IMR-90 (cell line): ENCODE measurements at regions of chr5 and their contacts with region 1.

Region 1: DNA sequence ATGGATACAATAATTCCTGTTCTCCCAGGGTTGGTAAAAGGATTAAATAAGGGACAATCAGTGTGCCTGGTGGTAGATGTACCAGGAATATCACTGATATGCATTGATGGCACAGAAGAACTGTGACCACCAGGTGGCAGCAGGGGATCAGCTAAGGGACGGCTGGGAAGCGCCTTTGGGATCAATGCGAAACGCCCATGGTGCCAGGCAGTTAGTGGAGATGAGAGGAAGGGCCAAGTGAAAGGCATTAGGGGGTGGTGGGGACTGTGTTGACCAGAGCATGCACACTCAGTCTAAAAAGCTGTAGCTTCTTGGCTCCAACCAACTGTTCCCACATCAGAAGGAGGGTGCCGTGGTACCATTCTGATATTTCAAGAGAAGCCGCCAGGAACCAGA is 55.6 kb downstream of the ARHGEF37 start:
- DNase-seq: peak; percentile 62
- ATAC-seq: peak; percentile 83
- H3K4me3 ChIP-seq: no peak overlapping the region
- H3K27ac ChIP-seq: no peak overlapping the region
- H3K4me1 ChIP-seq: peaks cover 9% of the 10 kb centered on the region
- H3K27me3 ChIP-seq: peaks cover 9% of the 10 kb centered on the region; the same call in 1 of the 2 replicates
- CTCF ChIP-seq: peak; percentile 80
- POLR2A ChIP-seq: no peak
- RAD21 ChIP-seq: peak; percentile 92

Region 2: GRCh38 chr5:148353634-148354033 is 1283.2 kb before region 1 on chr5:
- CTCF ChIA-PET with region 1: no interaction called
- POLR2A ChIA-PET with region 1: no interaction called
- dilution Hi-C with region 1: no loop called
- in situ Hi-C with region 1: no loop called
- intact Hi-C with region 1: no loop called
- DNase-seq: no peak
- ATAC-seq: no peak
- H3K4me3 ChIP-seq: no peak overlapping the region
- H3K27ac ChIP-seq: no peak overlapping the region
- H3K4me1 ChIP-seq: no peaks in the 10 kb centered on the region
- H3K27me3 ChIP-seq: no peaks in the 10 kb centered on the region
- CTCF ChIP-seq: no peak
- POLR2A ChIP-seq: no peak
- RAD21 ChIP-seq: no peak

Region 3: GRCh38 chr5:149485655-149486425 is 151.0 kb before region 1 on chr5:
- CTCF ChIA-PET with region 1: no interaction called
- POLR2A ChIA-PET with region 1: no interaction called
- dilution Hi-C with region 1: no loop called
- in situ Hi-C with region 1: no loop called
- intact Hi-C with region 1: no loop called
- DNase-seq: peak; percentile 100
- ATAC-seq: peak; percentile 74
- H3K4me3 ChIP-seq: no peak overlapping the region
- H3K27ac ChIP-seq: peak overlapping the region; percentile 84
- H3K4me1 ChIP-seq: peaks cover 31% of the 10 kb centered on the region
- H3K27me3 ChIP-seq: no peaks in the 10 kb centered on the region
- CTCF ChIP-seq: no peak
- POLR2A ChIP-seq: no peak
- RAD21 ChIP-seq: peak; percentile 8; the same call in 1 of the 2 replicates

Region 4: GRCh38 chr5:149576021-149576420 is 60.8 kb before region 1 on chr5:
- CTCF ChIA-PET with region 1: no interaction called
- POLR2A ChIA-PET with region 1: no interaction called
- dilution Hi-C with region 1: no loop called
- in situ Hi-C with region 1: no loop called
- intact Hi-C with region 1: no loop called
- DNase-seq: no peak
- ATAC-seq: no peak
- H3K4me3 ChIP-seq: no peak overlapping the region
- H3K27ac ChIP-seq: no peak overlapping the region
- H3K4me1 ChIP-seq: peaks cover 3% of the 10 kb centered on the region
- H3K27me3 ChIP-seq: no peaks in the 10 kb centered on the region
- CTCF ChIP-seq: no peak
- POLR2A ChIP-seq: no peak
- RAD21 ChIP-seq: no peak

Region 5: GRCh38 chr5:149680810-149681221 is 44.0 kb after region 1 on chr5:
- CTCF ChIA-PET with region 1: no interaction called
- POLR2A ChIA-PET with region 1: no interaction called
- dilution Hi-C with region 1: no loop called
- in situ Hi-C with region 1: no loop called
- intact Hi-C with region 1: no loop called
- DNase-seq: no peak
- ATAC-seq: no peak
- H3K4me3 ChIP-seq: no peak overlapping the region
- H3K27ac ChIP-seq: no peak overlapping the region
- H3K4me1 ChIP-seq: no peaks in the 10 kb centered on the region
- H3K27me3 ChIP-seq: peaks cover 67% of the 10 kb centered on the region
- CTCF ChIP-seq: no peak
- POLR2A ChIP-seq: no peak
- RAD21 ChIP-seq: no peak

Region 6: DNA sequence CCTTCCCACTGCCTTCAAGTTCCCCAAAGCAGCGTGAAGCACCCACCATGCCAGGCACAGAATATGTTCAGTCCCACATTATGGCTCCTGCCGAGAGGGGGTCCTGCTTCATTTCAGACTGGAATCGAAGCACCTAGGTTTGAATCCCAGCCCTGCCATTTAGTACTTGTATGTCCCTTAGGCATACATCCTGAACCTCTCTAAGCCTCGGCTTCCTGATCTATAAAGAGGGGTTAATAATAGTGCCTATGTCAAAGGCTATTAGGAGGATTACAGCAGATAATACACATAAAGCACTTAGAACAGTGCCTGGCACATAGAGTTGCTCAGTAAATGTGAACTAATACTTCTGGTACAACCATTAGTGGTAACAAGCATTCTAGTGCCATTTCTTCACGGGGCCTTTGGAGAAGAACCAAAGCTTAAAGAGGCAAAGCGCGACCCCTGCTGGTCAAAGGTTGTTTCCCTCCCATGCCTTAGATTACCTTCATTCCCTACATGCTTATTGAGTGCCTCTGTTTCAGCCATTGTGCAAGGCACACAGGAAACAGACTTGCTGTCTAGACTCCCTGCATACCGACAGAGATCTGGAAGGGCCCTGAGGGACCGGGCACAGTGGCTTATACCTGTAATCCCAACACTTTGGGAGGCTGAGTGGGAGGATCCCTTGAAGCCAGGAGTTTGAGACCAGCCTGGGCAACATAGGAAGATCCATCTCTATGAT is 191.5 kb after region 1 on chr5:
- CTCF ChIA-PET with region 1: interaction called, 10 read pairs
- POLR2A ChIA-PET with region 1: interaction called, 3 read pairs
- dilution Hi-C with region 1: loop called (anchors 10 kb)
- in situ Hi-C with region 1: loop called (anchors 5 kb)
- intact Hi-C with region 1: loop called (anchors 1 kb)
- DNase-seq: peak; percentile 91
- ATAC-seq: peak; percentile 93
- H3K4me3 ChIP-seq: no peak overlapping the region
- H3K27ac ChIP-seq: no peak overlapping the region
- H3K4me1 ChIP-seq: no peaks in the 10 kb centered on the region
- H3K27me3 ChIP-seq: peaks cover 2% of the 10 kb centered on the region; the same call in 1 of the 2 replicates
- CTCF ChIP-seq: peak; percentile 95
- POLR2A ChIP-seq: no peak
- RAD21 ChIP-seq: peak; percentile 96

Region 7: GRCh38 chr5:149960272-149961185 is 323.7 kb after region 1 on chr5 and contains the start of gene SLC26A2:
- CTCF ChIA-PET with region 1: interaction called, 3 read pairs
- POLR2A ChIA-PET with region 1: no interaction called
- dilution Hi-C with region 1: no loop called
- in situ Hi-C with region 1: no loop called
- intact Hi-C with region 1: loop called (anchors 1 kb)
- DNase-seq: peak; percentile 97
- ATAC-seq: peak; percentile 100
- H3K4me3 ChIP-seq: peak within 1 kb of the TSS; percentile 87
- H3K27ac ChIP-seq: peak within 1 kb of the TSS; percentile 70
- H3K4me1 ChIP-seq: peaks cover 6% of the 10 kb centered on the region
- H3K27me3 ChIP-seq: no peaks in the 10 kb centered on the region
- CTCF ChIP-seq: no peak
- POLR2A ChIP-seq: peak; percentile 89
- RAD21 ChIP-seq: no peak
- total RNA-seq, gene SLC26A2: 9.9 and 12.8 TPM in 2 replicates

Region 8: DNA sequence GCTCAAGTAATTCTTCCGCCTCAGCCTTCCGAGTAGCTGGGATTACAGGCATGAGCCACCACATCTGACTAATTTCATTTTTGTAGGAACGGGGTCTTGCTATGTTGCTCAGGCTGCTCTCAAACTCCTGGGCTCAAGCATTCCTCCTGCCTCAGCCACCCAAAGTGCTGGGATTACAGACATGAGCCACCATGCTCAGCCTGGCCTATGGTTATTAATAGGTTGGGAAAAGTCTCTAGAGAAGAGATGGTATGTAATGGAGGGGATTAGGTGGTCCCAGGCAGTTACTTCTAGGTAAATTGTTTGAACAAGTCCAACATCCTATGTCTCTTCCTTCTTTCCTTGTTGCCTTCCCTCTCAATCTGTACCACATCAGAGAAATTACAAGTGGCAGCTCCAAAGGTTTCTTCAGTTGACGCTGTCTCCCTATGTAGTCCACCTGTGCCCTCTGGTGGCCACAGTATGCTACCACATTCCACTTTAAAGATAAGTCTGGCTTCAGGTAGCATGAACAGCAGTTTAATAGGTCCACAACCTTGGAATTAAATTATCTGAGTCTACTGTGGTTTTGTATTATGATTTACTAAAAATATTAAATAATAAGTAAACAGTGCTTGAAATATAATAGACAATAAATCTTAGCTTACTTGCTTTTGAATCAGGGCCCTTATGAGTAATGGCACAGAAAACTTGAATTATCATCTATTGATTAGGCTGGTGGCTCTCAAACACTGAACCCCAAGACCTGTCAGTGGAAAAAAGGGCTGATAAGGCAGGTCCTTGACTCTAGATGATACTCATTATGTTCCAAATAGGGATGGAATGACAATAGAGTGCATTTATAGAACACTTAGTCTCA is 353.9 kb after region 1 on chr5:
- CTCF ChIA-PET with region 1: interaction called, 3 read pairs
- POLR2A ChIA-PET with region 1: no interaction called
- dilution Hi-C with region 1: no loop called
- in situ Hi-C with region 1: loop called (anchors 5 kb)
- intact Hi-C with region 1: loop called (anchors 2 kb)
- DNase-seq: peak; percentile 76
- ATAC-seq: peak; percentile 93
- H3K4me3 ChIP-seq: no peak overlapping the region
- H3K27ac ChIP-seq: no peak overlapping the region
- H3K4me1 ChIP-seq: peaks cover 2% of the 10 kb centered on the region; the same call in 1 of the 2 replicates
- H3K27me3 ChIP-seq: no peaks in the 10 kb centered on the region
- CTCF ChIP-seq: peak; percentile 94
- POLR2A ChIP-seq: no peak
- RAD21 ChIP-seq: peak; percentile 94

Region 9: DNA sequence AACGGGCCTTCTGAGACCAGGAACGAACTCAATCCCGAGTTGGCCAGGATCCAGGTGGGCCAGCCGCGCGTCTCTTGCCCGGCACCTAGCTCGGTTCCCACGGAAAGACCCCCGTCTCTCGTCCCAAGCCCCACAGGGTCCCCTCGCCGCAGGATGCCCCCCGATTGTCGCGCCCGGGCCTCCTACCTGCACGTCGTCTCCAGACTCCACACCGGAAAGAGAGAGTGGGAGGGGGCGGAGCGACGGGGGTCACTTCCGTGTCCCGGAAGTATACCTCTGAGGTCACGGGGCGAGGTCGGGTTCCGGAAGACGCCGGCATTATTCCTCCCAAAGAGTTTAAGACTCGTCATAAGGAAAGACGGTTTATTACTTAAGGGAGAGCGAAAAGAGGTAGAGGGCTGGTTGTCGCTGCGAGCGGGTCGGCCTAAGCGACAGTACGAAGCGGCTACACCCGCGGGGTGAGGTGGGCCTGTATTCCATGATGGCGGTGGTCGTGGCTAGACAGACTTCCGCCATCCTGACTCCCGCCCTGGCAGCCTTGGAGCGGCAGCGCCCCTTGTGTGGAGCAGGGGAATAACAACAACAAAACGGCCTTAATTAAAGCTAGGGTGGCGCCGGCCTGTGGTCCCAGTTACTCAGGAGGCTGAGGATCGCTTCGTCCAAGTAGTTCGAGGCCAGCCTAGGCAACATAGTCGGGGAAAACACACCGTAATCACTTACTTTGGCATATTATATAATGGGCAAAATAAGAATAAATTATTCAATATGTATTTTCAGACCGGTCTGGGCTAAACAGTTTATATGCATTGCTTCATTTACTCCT is 812.9 kb after region 1 on chr5 and contains the start of gene RPS14:
- CTCF ChIA-PET with region 1: no interaction called
- POLR2A ChIA-PET with region 1: no interaction called
- dilution Hi-C with region 1: no loop called
- in situ Hi-C with region 1: loop called (anchors 25 kb)
- intact Hi-C with region 1: no loop called
- DNase-seq: peak; percentile 92
- ATAC-seq: peak; percentile 92
- H3K4me3 ChIP-seq: peak within 1 kb of the TSS; percentile 81
- H3K27ac ChIP-seq: peak within 1 kb of the TSS; percentile 97
- H3K4me1 ChIP-seq: peaks cover 4% of the 10 kb centered on the region
- H3K27me3 ChIP-seq: no peaks in the 10 kb centered on the region
- CTCF ChIP-seq: peak; percentile 88
- POLR2A ChIP-seq: peak; percentile 91
- RAD21 ChIP-seq: peak; percentile 51
- total RNA-seq, gene RPS14: 7,310 and 7,583 TPM in 2 replicates